ENCODE measurements at regions of chr6 and their contacts with region 1.

Region 1: DNA sequence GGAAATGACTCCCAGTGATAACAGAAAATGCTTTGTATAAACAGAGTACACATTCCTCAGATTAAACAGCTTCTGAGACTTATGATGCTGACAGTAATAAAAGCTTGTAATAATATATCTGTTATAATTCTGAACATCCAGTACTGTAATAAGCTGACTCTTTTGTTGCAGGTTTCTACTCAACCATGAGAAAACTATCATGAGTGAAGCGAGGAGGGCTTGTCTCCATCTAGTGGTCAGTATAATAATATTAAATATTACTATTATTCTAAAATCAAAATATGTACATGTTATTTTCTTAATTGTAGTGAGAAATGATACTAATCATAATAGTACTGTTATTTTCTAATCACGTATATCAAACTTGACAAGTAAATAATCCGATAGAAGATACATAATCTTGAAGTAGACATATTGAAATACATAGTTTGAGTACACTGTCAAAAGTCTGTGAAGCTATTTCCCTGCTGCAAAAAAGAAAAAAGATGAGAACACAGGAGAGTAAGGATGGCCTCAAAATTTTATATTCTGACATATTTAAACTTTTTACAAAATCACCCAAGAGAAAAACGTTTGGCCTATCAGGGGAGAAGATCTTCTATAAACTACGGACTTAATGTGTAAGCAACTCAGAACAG is 183.1 kb downstream of the MOXD1 start:
- DNase-seq: peak; percentile 9
- CTCF ChIP-seq: peak; percentile 9

Region 2: GRCh38 chr6:131914967-131915751 is 303.0 kb before region 1 on chr6:
- CTCF ChIA-PET with region 1: interaction called, 30 read pairs
- POLR2A ChIA-PET with region 1: no interaction called
- DNase-seq: peak; percentile 51
- CTCF ChIP-seq: peak; percentile 82

Region 3: DNA sequence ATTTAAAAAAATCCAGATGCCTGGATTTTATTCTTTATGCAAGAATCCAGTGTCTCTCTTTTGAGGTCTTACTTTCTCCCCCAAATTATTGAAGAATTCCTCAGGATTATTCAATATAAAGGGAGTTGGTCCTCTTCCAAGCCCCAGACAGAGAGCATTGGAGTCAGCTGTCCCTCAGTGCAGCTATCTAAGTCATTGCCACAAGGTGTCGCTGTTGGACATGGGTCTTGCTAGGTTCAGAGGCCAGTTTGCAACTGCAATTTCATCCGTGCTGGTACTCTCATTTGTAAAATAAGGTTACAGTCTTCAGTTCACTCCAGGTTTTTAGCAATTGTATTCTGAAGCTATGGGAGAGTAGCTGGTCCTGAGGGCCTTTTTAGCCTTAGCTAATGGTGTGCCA is 294.8 kb before region 1 on chr6:
- CTCF ChIA-PET with region 1: interaction called, 14 read pairs
- POLR2A ChIA-PET with region 1: no interaction called
- DNase-seq: no peak
- CTCF ChIP-seq: peak; percentile 47

Region 4: DNA sequence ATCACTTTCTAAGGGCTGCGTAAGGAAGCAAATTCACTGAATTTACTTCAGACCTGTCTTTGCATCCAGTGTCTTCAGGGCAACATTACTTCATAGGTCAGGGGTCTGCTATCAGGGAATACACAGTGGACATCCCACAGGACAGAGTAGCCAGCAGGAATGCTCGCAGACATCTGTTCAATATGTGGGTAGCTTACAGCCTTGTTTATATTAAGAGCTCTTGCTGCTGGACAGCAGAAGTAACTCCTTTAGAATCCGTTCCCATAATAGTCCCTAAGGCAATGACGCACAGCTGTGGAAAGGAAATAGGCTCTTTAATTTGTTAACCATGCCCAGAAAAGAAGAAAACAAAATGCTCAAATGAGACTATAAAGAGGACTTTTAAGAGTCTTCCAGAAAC is 15.6 kb before region 1 on chr6:
- CTCF ChIA-PET with region 1: no interaction called
- POLR2A ChIA-PET with region 1: no interaction called
- DNase-seq: no peak
- CTCF ChIP-seq: no peak